ENCODE measurements at regions of chr2 and their contacts with region 1.

Region 1: DNA sequence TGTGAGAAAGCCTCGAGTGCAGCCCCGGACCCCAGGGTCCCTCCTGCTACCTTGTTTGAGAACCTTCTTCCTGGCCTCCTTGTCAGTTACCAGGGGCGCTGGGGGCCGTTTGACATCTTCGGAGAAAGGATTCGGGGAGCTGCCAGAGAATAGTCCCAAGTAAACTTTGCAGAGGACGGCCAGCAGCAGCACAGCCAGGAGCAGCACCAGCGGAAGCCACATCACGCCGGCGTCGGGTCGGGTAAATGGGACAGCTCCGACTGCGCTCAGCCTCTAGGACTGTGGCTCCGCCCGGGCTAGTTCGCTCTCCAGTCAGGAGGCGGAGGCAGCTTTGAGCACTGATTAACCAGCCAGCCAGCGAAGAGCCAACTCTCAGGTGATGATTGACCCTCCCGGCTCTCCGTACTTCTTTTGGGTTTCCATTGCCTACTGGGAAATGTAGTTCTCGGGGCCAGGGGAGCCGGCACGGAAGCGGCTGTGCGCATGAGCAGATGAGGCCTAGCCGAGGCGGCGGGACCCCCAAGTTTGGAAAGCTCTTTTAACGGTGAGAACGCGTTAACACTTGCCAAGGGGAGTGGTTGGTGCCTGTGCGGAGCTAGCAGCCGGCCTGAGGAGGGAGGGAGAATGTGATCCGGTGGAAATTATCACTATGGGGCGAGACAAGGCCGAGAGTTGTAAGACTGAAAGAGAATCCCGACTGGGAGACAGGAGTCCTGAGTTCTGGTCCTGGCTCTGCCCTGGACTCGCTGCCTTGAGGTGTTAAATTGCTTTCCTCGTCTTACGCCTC is at the starts of genes ELMOD3 and RETSAT:
- DNase-seq: peak; percentile 96 to 99 (median 96)
- ATAC-seq: peak; percentile 98
- H3K4me3 ChIP-seq: peak within 1 kb of the TSS; percentile 83
- H3K27ac ChIP-seq: peak within 1 kb of the TSS; percentile 84
- H3K4me1 ChIP-seq: peaks cover 9 to 15% of the 10 kb centered on the region in 2 experiments
- H3K27me3 ChIP-seq: no peaks in the 10 kb centered on the region
- CTCF ChIP-seq: no peak
- EP300 ChIP-seq: peak; percentile 44
- POLR2A ChIP-seq: peak; percentile 93
- RAD21 ChIP-seq: no peak; a peak in 1 of 4 replicates
- polyA plus RNA-seq, gene ELMOD3: 2.7 to 6.4 TPM
- polyA plus RNA-seq, gene RETSAT: 1.9 to 5.6 TPM

Region 2: GRCh38 chr2:85340034-85340892 is 14.2 kb before region 1 on chr2:
- CTCF ChIA-PET with region 1: interaction called, 3 read pairs
- POLR2A ChIA-PET with region 1: interaction called, 11 read pairs
- in situ Hi-C with region 1: no loop called
- intact Hi-C with region 1: no loop called
- DNase-seq: no peak
- ATAC-seq: peak; percentile 48; the same call in 2 of the 3 replicates
- H3K4me3 ChIP-seq: no peak overlapping the region
- H3K27ac ChIP-seq: no peak overlapping the region
- H3K4me1 ChIP-seq: peaks cover 0 to 3% of the 10 kb centered on the region in 2 experiments; a peak in 3 of 5 replicates
- H3K27me3 ChIP-seq: no peaks in the 10 kb centered on the region; a peak in 1 of 5 replicates
- CTCF ChIP-seq: no peak
- EP300 ChIP-seq: no peak
- POLR2A ChIP-seq: no peak
- RAD21 ChIP-seq: no peak

Region 3: GRCh38 chr2:85369500-85369899 is 15.0 kb after region 1 on chr2:
- CTCF ChIA-PET with region 1: no interaction called
- POLR2A ChIA-PET with region 1: interaction called, 10 read pairs
- in situ Hi-C with region 1: no loop called
- intact Hi-C with region 1: no loop called
- DNase-seq: no peak
- ATAC-seq: no peak
- H3K4me3 ChIP-seq: no peak overlapping the region
- H3K27ac ChIP-seq: no peak overlapping the region
- H3K4me1 ChIP-seq: no peaks in the 10 kb centered on the region
- H3K27me3 ChIP-seq: no peaks in the 10 kb centered on the region
- CTCF ChIP-seq: no peak
- EP300 ChIP-seq: no peak
- POLR2A ChIP-seq: no peak
- RAD21 ChIP-seq: no peak

Region 4: DNA sequence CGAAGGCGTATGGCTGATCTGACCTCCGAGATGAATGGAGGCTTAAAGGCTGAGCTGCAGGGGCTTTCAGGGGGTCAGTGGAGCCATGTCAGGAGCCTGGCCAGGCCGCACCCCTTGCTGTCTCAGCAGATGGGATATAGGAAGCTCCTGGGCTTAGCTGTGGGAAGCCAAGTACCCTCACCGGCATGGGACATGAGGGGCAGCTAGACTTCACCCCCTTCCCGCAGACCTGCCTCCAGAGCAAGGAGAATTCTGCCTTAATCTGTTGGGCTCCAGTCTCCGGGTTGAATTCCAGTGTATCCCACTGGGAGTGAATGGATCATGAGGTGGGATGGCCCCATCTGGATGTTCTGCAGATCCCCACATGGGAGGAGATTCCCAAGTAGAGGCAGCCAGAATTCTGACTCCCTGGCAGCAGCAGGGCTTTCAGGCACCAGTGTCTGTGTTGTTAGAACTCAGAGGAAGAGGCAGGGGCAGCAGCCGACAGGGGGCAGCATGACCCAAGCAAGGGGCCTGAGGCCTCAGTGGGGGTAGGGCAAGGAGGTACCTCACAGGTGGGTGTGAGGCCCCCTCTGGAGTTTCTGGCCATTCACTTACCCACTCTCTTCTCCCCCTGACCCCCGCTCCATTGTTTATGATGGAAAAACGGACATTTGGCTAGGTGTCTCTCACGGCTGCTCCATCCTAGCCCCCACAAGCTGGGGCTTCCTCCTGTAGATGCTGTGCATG is 36.6 kb after region 1 on chr2:
- CTCF ChIA-PET with region 1: no interaction called
- POLR2A ChIA-PET with region 1: no interaction called
- in situ Hi-C with region 1: no loop called
- intact Hi-C with region 1: no loop called
- DNase-seq: peak; percentile 79 to 85 (median 81)
- ATAC-seq: peak; percentile 96
- H3K4me3 ChIP-seq: no peak overlapping the region
- H3K27ac ChIP-seq: no peak overlapping the region
- H3K4me1 ChIP-seq: peaks cover 0 to 5% of the 10 kb centered on the region in 2 experiments; a peak in 1 of 5 replicates
- H3K27me3 ChIP-seq: no peaks in the 10 kb centered on the region
- CTCF ChIP-seq: peak; percentile 88 to 92 (median 91)
- EP300 ChIP-seq: no peak
- POLR2A ChIP-seq: no peak
- RAD21 ChIP-seq: peak; percentile 96 to 97

Measured in K562 (cell line).